ENCODE measurements at regions of chr11 and their contacts with region 1.

Region 1: GRCh38 chr11:58629857-58630256 is 7.4 kb downstream of the CNTF start:
- DNase-seq: peak in 4 of 5 donors; percentile 12 to 34 (median 18)
- H3K4me3 ChIP-seq: no peak overlapping the region
- H3K4me3 Mint-ChIP-seq: no peak overlapping the region
- H3K27ac ChIP-seq: no peak overlapping the region
- H3K27ac Mint-ChIP-seq: peak overlapping the region in 2 of 7 donors; percentile 1 to 25
- H3K4me1 ChIP-seq: no peaks in the 10 kb centered on the region
- H3K4me1 Mint-ChIP-seq: peaks cover 0 to 4% (median 3%) of the 10 kb centered on the region in 4 donors
- H3K27me3 ChIP-seq: no peaks in the 10 kb centered on the region
- H3K27me3 Mint-ChIP-seq: no peaks in the 10 kb centered on the region

Region 2: DNA sequence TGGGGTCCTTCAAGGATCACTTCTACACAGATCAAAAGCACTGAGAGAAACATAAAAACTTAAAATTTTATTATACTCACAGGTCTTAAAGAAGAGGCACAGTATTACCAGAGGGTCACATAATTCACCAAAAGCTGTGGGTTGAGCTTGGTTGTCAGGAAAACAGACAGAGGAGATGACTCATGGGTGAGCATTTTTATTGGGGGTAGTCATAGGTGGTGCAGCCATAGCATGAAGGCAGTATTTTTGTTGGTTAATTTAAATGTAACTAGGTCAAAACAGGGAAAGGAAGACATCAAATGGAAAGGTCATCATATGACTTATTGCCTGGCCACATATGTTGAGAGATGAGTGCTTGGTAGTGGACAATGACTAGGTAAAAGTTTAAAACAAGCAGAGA is 295.1 kb before region 1 on chr11:
- CTCF ChIA-PET with region 1: no interaction called
- POLR2A ChIA-PET with region 1: no interaction called
- intact Hi-C with region 1: no loop called
- DNase-seq: no peak
- H3K4me3 ChIP-seq: no peak overlapping the region
- H3K4me3 Mint-ChIP-seq: no peak overlapping the region
- H3K27ac ChIP-seq: no peak overlapping the region
- H3K27ac Mint-ChIP-seq: no peak overlapping the region
- H3K4me1 ChIP-seq: no peaks in the 10 kb centered on the region
- H3K4me1 Mint-ChIP-seq: no peaks in the 10 kb centered on the region
- H3K27me3 ChIP-seq: no peaks in the 10 kb centered on the region
- H3K27me3 Mint-ChIP-seq: peaks cover 7 to 12% of the 10 kb centered on the region in 2 donors

Region 3: DNA sequence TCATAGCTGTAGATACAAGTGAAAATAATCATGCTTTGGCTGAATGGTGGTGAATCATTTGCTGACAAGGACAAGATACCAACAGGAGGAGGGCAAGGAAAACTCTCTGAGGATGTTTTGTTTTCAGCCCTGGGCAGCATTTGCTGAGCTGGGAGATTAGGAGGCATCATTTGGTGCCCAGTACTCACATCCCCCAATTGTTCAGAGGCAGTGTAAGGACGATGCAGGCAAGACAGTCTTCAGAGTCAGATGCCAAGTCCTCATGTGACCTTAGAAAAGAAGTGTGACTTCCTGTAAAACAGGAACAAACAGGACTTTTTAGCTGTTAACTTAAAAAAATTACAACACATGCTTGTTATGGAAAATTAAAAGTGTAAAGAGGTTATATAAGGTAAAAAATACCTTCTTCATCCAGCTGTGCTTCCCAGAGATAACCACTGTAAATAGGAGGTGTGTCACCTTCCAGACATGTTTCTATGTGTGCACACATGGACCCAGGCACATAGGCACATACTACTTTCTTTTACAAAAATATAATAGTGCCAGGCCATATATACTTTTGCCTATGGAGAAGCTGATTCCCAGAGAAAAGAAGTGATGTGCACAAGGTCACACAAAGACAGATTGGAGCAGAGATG is 10.6 kb after region 1 on chr11:
- CTCF ChIA-PET with region 1: interaction called, 43 read pairs
- POLR2A ChIA-PET with region 1: interaction called, 5 read pairs
- intact Hi-C with region 1: no loop called
- DNase-seq: peak in 4 of 5 donors; percentile 16 to 29 (median 21)
- H3K4me3 ChIP-seq: no peak overlapping the region
- H3K4me3 Mint-ChIP-seq: peak overlapping the region in 7 of 8 donors; percentile 26 to 64 (median 33)
- H3K27ac ChIP-seq: no peak overlapping the region
- H3K27ac Mint-ChIP-seq: peak overlapping the region in 6 of 7 donors; percentile 29 to 85 (median 72)
- H3K4me1 ChIP-seq: peaks cover 21% of the 10 kb centered on the region
- H3K4me1 Mint-ChIP-seq: peaks cover 14 to 26% (median 18%) of the 10 kb centered on the region in 4 donors
- H3K27me3 ChIP-seq: no peaks in the 10 kb centered on the region
- H3K27me3 Mint-ChIP-seq: no peaks in the 10 kb centered on the region

Region 4: DNA sequence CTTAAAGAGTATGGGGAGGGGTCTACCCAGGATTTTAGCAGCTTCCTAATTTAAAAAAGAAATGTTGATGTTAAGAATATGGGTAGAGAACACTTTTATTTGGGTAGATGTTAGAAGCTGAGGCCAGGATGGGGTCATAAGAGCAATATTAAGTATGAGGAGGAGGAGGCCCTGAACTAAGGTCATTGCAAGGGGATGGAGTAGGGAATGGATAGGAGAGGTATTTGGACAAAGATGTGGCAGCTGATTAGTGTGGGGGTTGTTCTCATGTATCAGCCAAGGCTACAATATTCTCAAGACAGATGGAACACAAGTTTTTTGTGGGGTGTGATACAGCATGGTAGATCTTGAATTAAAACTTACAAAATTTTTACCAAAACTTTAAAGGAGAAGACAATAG is 250.3 kb after region 1 on chr11:
- CTCF ChIA-PET with region 1: no interaction called
- POLR2A ChIA-PET with region 1: no interaction called
- intact Hi-C with region 1: no loop called
- DNase-seq: no peak
- H3K4me3 ChIP-seq: no peak overlapping the region
- H3K4me3 Mint-ChIP-seq: no peak overlapping the region
- H3K27ac ChIP-seq: no peak overlapping the region
- H3K27ac Mint-ChIP-seq: no peak overlapping the region
- H3K4me1 ChIP-seq: no peaks in the 10 kb centered on the region
- H3K4me1 Mint-ChIP-seq: no peaks in the 10 kb centered on the region
- H3K27me3 ChIP-seq: no peaks in the 10 kb centered on the region
- H3K27me3 Mint-ChIP-seq: peaks cover 10 to 14% of the 10 kb centered on the region in 2 donors